ENCODE measurements at regions of chr2 and their contacts with region 1.

Region 1: GRCh38 chr2:197728338-197729207 is 23.4 kb downstream of the MARS2 start:
- DNase-seq: no peak
- H3K4me3 Mint-ChIP-seq: no peak overlapping the region
- H3K27ac Mint-ChIP-seq: no peak overlapping the region
- H3K4me1 Mint-ChIP-seq: no peaks in the 10 kb centered on the region
- H3K27me3 Mint-ChIP-seq: peaks cover 6% of the 10 kb centered on the region

Region 2: GRCh38 chr2:196361606-196362326 is 1366.8 kb before region 1 on chr2:
- intact Hi-C with region 1: loop called (anchors 10 kb)
- DNase-seq: no peak
- H3K4me3 Mint-ChIP-seq: no peak overlapping the region
- H3K27ac Mint-ChIP-seq: no peak overlapping the region
- H3K4me1 Mint-ChIP-seq: no peaks in the 10 kb centered on the region
- H3K27me3 Mint-ChIP-seq: no peaks in the 10 kb centered on the region